Transverse colon (tissue), 4 donors: ENCODE measurements at regions of chr17 and their contacts with region 1.

Region 1: GRCh38 chr17:11240041-11240801 is 792 bp upstream of the SHISA6 start:
- DNase-seq: peak; percentile 15
- H3K4me3 ChIP-seq: peak overlapping the region in 3 of 4 donors; percentile 30 to 45 (median 32)
- H3K27ac ChIP-seq: no peak overlapping the region
- H3K4me1 ChIP-seq: peaks cover 0 to 11% (median 3%) of the 10 kb centered on the region in 4 donors
- H3K27me3 ChIP-seq: peaks cover 75% of the 10 kb centered on the region
- CTCF ChIP-seq: no peak
- EP300 ChIP-seq: no peak
- POLR2A ChIP-seq: no peak

Region 2: DNA sequence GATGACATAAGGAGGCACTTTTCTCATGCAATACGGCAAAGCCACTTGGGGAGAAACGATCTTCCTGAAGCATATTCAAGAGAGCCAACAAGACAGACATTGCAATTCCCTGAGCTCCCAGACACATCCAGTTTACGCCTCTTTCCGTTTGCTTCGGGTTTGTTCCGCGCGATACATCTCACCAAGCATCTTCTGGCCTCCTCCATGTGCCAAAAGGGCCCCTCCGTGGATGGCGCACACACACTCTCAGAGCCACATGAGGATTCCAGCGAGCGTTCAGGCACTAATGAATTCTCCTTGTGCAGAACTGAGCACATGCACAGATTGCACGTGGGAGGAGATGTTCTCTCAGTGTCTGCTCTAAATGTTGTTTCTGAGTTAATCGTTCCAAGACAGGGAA is 145.9 kb before region 1 on chr17:
- in situ Hi-C with region 1: loop called in 1 of 4 experiments (anchors 25 kb)
- intact Hi-C with region 1: no loop called
- DNase-seq: no peak
- H3K4me3 ChIP-seq: no peak overlapping the region
- H3K27ac ChIP-seq: no peak overlapping the region
- H3K4me1 ChIP-seq: no peaks in the 10 kb centered on the region
- H3K27me3 ChIP-seq: no peaks in the 10 kb centered on the region
- CTCF ChIP-seq: no peak
- EP300 ChIP-seq: no peak
- POLR2A ChIP-seq: no peak

Region 3: GRCh38 chr17:11356371-11356770 is 116.2 kb after region 1 on chr17:
- in situ Hi-C with region 1: no loop called
- intact Hi-C with region 1: no loop called
- DNase-seq: no peak
- H3K4me3 ChIP-seq: no peak overlapping the region
- H3K27ac ChIP-seq: no peak overlapping the region
- H3K4me1 ChIP-seq: no peaks in the 10 kb centered on the region
- H3K27me3 ChIP-seq: no peaks in the 10 kb centered on the region
- CTCF ChIP-seq: no peak
- EP300 ChIP-seq: no peak
- POLR2A ChIP-seq: no peak